ENCODE measurements at regions of chr1 and their contacts with region 1.

Region 1: GRCh38 chr1:43414634-43415223 is 25.0 kb downstream of the SZT2 start:
- DNase-seq: peak; percentile 66
- H3K4me3 ChIP-seq: no peak overlapping the region
- H3K27ac ChIP-seq: no peak overlapping the region
- H3K4me1 ChIP-seq: no peaks in the 10 kb centered on the region
- H3K27me3 ChIP-seq: no peaks in the 10 kb centered on the region
- CTCF ChIP-seq: peak; percentile 53 to 69 (median 61)
- EP300 ChIP-seq: no peak
- POLR2A ChIP-seq: no peak

Region 2: GRCh38 chr1:43227143-43227764 is 187.5 kb before region 1 on chr1:
- in situ Hi-C with region 1: loop called (anchors 5 to 10 kb)
- intact Hi-C with region 1: no loop called
- DNase-seq: peak; percentile 89
- H3K4me3 ChIP-seq: no peak overlapping the region
- H3K27ac ChIP-seq: no peak overlapping the region
- H3K4me1 ChIP-seq: peaks cover 0 to 6% (median 0%) of the 10 kb centered on the region in 4 donors
- H3K27me3 ChIP-seq: no peaks in the 10 kb centered on the region
- CTCF ChIP-seq: peak; percentile 92 to 96 (median 95)
- EP300 ChIP-seq: no peak
- POLR2A ChIP-seq: no peak

Region 3: GRCh38 chr1:43238085-43238484 is 176.6 kb before region 1 on chr1:
- in situ Hi-C with region 1: loop called in 1 of 4 experiments (anchors 10 kb)
- intact Hi-C with region 1: no loop called
- DNase-seq: peak; percentile 83
- H3K4me3 ChIP-seq: no peak overlapping the region
- H3K27ac ChIP-seq: no peak overlapping the region
- H3K4me1 ChIP-seq: peaks cover 0 to 18% (median 7%) of the 10 kb centered on the region in 4 donors
- H3K27me3 ChIP-seq: no peaks in the 10 kb centered on the region
- CTCF ChIP-seq: peak; percentile 55 to 85 (median 64)
- EP300 ChIP-seq: no peak
- POLR2A ChIP-seq: no peak

Measured in transverse colon (tissue), 4 donors.